ENCODE measurements at regions of chr13 and their contacts with region 1.

Region 1: GRCh38 chr13:32586080-32586900 is at the start of gene PDS5B:
- DNase-seq: peak; percentile 96
- H3K4me3 ChIP-seq: peak within 1 kb of the TSS; percentile 43 to 98 (median 89)
- H3K27ac ChIP-seq: peak within 1 kb of the TSS; percentile 86
- H3K4me1 ChIP-seq: peaks cover 20% of the 10 kb centered on the region
- H3K27me3 ChIP-seq: peaks cover 0 to 1% of the 10 kb centered on the region in 2 experiments
- CTCF ChIP-seq: peak; percentile 76 to 93
- POLR2A ChIP-seq: peak; percentile 83
- total RNA-seq, gene PDS5B: 40.3 and 41.0 TPM in 2 replicates

Region 2: GRCh38 chr13:32639502-32640105 is 53.3 kb after region 1 on chr13:
- CTCF ChIA-PET with region 1: interaction called, 70 read pairs
- POLR2A ChIA-PET with region 1: interaction called, 4 read pairs
- dilution Hi-C with region 1: no loop called
- intact Hi-C with region 1: loop called (anchors 1 kb)
- DNase-seq: peak; percentile 67
- H3K4me3 ChIP-seq: no peak overlapping the region
- H3K27ac ChIP-seq: no peak overlapping the region
- H3K4me1 ChIP-seq: peaks cover 3% of the 10 kb centered on the region
- H3K27me3 ChIP-seq: no peaks in the 10 kb centered on the region
- CTCF ChIP-seq: peak; percentile 69 to 74
- POLR2A ChIP-seq: no peak

Region 3: GRCh38 chr13:32737111-32737571 is 150.9 kb after region 1 on chr13:
- CTCF ChIA-PET with region 1: interaction called, 3 read pairs
- POLR2A ChIA-PET with region 1: no interaction called
- dilution Hi-C with region 1: no loop called
- intact Hi-C with region 1: loop called (anchors 5 kb)
- DNase-seq: peak; percentile 70
- H3K4me3 ChIP-seq: peak overlapping the region in 2 of 3 experiments; percentile 21 to 63
- H3K27ac ChIP-seq: peak overlapping the region; percentile 64
- H3K4me1 ChIP-seq: peaks cover 14% of the 10 kb centered on the region
- H3K27me3 ChIP-seq: no peaks in the 10 kb centered on the region
- CTCF ChIP-seq: no peak
- POLR2A ChIP-seq: no peak

Region 4: DNA sequence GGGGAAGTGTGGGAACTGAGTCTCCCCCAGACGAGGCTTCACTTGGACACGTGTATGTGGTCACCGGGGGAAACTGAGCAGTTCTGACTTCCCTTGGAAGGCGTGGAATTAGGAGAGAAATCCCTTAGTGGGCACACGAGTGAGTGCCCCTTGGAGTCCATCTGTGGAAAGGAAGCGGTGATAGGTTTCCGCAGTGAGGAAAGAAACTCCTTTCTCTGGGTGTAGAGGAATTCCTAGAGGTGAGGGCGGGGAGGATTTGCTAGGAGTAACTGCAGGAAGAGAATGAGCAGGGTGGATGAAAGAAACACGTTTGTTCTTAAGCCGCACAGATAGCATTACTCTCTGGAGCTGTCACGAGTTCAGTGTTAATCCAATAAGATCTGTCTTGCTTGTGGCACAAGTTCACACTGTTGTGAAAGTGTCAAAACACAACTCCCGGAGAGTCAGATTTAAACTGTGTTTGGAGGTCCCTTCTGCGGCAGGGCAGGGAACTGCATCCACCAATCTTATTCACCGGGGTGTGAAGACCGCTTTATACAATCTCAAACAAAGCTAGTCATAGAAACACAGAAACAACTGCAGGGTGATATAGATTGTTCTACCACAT is 431.1 kb after region 1 on chr13:
- CTCF ChIA-PET with region 1: no interaction called
- POLR2A ChIA-PET with region 1: no interaction called
- dilution Hi-C with region 1: no loop called
- intact Hi-C with region 1: loop called (anchors 2 kb)
- DNase-seq: peak; percentile 30
- H3K4me3 ChIP-seq: no peak overlapping the region
- H3K27ac ChIP-seq: no peak overlapping the region
- H3K4me1 ChIP-seq: peaks cover 8% of the 10 kb centered on the region
- H3K27me3 ChIP-seq: peaks cover 46 to 70% of the 10 kb centered on the region in 2 experiments
- CTCF ChIP-seq: peak; percentile 29 to 32
- POLR2A ChIP-seq: no peak

Region 5: GRCh38 chr13:33228648-33229445 is 642.6 kb after region 1 on chr13:
- CTCF ChIA-PET with region 1: no interaction called
- POLR2A ChIA-PET with region 1: no interaction called
- dilution Hi-C with region 1: no loop called
- intact Hi-C with region 1: loop called (anchors 2 kb)
- DNase-seq: peak; percentile 71
- H3K4me3 ChIP-seq: no peak overlapping the region
- H3K27ac ChIP-seq: peak overlapping the region; percentile 46
- H3K4me1 ChIP-seq: peaks cover 31% of the 10 kb centered on the region
- H3K27me3 ChIP-seq: no peaks in the 10 kb centered on the region
- CTCF ChIP-seq: peak; percentile 65 to 70
- POLR2A ChIP-seq: no peak

Region 6: DNA sequence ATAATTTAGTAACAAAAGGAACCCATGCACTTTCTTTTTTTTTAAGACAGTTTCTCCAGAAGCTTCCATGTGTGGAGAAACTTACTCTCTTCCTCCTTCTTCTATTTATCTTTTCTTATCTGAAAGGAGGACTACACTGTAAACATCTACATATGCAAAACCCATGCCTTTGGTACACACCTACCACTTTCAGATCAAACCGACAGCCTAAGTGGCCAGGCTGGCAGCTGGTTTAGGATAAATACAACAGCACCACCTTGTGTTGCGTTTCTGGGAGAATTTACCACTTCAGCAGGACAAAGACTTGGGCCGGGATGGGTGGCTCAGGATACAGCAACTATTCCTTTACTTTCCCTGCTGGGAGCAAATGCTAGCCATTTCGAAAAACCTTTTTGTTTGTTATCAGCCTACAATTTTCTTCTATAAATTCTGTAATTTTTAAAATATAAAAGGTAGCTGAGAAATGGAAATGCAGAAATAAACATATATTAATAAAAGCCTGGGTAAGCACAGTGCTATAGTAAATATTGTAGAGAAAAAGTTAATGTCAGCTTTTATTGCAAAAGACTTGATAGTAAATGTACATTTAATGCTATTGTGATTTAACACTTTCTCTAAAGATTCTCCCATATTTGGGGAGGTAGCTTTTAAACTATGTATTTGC is 1137.6 kb after region 1 on chr13:
- CTCF ChIA-PET with region 1: interaction called, 8 read pairs
- POLR2A ChIA-PET with region 1: no interaction called
- dilution Hi-C with region 1: no loop called
- intact Hi-C with region 1: loop called (anchors 1 kb)
- DNase-seq: peak; percentile 85
- H3K4me3 ChIP-seq: no peak overlapping the region
- H3K27ac ChIP-seq: no peak overlapping the region
- H3K4me1 ChIP-seq: peaks cover 10% of the 10 kb centered on the region
- H3K27me3 ChIP-seq: no peaks in the 10 kb centered on the region
- CTCF ChIP-seq: peak; percentile 62 to 70
- POLR2A ChIP-seq: no peak